Activated CD4-positive, alpha-beta T cell treated with anti-CD3 and anti-CD28 coated beads for 36 hours (primary cell): ENCODE measurements at regions of chr14 and their contacts with region 1.

Region 1: GRCh38 chr14:55936691-55937090 is 181.5 kb upstream of the PELI2 start:
- DNase-seq: no peak
- ATAC-seq: no peak
- H3K4me3 Mint-ChIP-seq: no peak overlapping the region
- H3K27ac Mint-ChIP-seq: no peak overlapping the region
- H3K4me1 Mint-ChIP-seq: no peaks in the 10 kb centered on the region
- H3K27me3 Mint-ChIP-seq: peaks cover 2% of the 10 kb centered on the region

Region 2: GRCh38 chr14:55454264-55455002 is 482.3 kb before region 1 on chr14:
- CTCF ChIA-PET with region 1: no interaction called
- POLR2A ChIA-PET with region 1: no interaction called
- intact Hi-C with region 1: no loop called
- DNase-seq: no peak
- ATAC-seq: no peak
- H3K4me3 Mint-ChIP-seq: no peak overlapping the region
- H3K27ac Mint-ChIP-seq: no peak overlapping the region
- H3K4me1 Mint-ChIP-seq: peaks cover 10% of the 10 kb centered on the region
- H3K27me3 Mint-ChIP-seq: no peaks in the 10 kb centered on the region

Region 3: DNA sequence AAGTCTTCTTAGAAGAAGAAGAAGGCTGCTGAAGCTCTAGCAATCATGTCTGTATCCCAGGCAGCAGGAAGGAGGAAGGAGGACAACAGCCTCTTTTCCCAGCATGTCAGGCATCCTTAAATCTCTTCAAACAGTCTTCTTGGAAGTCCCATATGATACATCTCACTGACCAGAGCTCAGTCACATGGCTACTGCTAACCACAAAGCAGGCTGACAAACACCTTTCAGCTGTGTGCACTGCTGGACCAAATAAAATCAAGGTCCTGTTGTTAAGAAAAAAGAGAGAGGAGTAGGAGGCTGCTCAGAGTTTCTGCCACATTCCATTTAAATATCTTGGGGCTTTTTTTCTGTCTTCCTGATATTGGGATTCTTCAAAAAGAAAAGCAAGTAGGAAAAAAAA is 21.9 kb before region 1 on chr14:
- CTCF ChIA-PET with region 1: no interaction called
- POLR2A ChIA-PET with region 1: interaction called, 10 read pairs
- intact Hi-C with region 1: no loop called
- DNase-seq: no peak
- ATAC-seq: no peak
- H3K4me3 Mint-ChIP-seq: no peak overlapping the region
- H3K27ac Mint-ChIP-seq: no peak overlapping the region
- H3K4me1 Mint-ChIP-seq: no peaks in the 10 kb centered on the region
- H3K27me3 Mint-ChIP-seq: peaks cover 20% of the 10 kb centered on the region